Activated CD4-positive, alpha-beta T cell treated with anti-CD3 and anti-CD28 coated beads, Interleukin-2, amount 10 ng/mL, durations not matched to agents 7 days and 5 days (primary cell): ENCODE measurements at regions of chr9 and their contacts with region 1.

Region 1: GRCh38 chr9:23717505-23717904 is 108.5 kb downstream of the ELAVL2 start:
- DNase-seq: no peak
- H3K4me3 Mint-ChIP-seq: no peak overlapping the region
- H3K27ac Mint-ChIP-seq: no peak overlapping the region
- H3K4me1 Mint-ChIP-seq: no peaks in the 10 kb centered on the region
- H3K27me3 Mint-ChIP-seq: no peaks in the 10 kb centered on the region

Region 2: GRCh38 chr9:23754551-23754950 is 37.0 kb after region 1 on chr9:
- CTCF ChIA-PET with region 1: interaction called, 10 read pairs
- POLR2A ChIA-PET with region 1: no interaction called
- DNase-seq: no peak
- H3K4me3 Mint-ChIP-seq: no peak overlapping the region
- H3K27ac Mint-ChIP-seq: no peak overlapping the region
- H3K4me1 Mint-ChIP-seq: no peaks in the 10 kb centered on the region
- H3K27me3 Mint-ChIP-seq: no peaks in the 10 kb centered on the region